ENCODE measurements at regions of chr3 and their contacts with region 1.

Region 1: DNA sequence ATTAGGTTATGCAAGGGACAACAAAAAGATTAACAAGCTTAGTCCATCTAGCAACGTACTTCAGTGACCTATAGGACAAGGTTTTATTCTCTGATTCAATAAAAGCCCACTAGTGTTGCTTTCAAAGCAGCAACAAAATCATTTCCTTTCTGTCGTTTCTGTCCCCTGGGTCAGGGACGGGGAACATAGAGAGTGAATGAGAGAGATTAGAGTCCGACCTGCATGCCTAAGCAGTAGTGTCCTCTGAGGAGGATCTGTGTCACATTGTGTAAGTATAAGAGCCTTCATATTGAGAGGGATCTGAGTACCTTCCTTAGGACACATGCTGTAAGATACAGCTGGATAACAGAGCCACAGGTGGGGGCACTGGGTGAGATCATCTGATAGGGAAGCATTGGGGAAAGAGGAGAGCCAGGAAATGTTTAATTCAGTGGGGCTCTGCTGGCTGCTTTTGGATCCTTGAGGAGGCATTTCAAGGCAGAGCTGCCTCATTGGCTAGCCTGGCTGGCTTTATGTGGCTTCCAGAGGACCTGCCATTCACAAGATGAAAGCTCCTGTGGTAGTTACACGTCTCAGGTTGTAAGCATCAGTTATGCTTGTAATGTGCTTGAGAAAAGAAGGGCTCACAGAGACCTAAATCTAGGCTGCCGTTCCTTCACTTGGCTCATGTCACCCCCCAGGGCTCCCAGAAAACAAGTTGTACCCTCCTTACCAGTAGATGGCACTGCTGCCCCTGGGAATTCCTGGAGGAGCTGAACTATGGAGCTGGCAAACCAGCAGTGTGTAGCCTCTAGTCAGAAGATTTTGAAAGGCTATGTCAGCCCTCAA is 2.7 kb downstream of the TMEM108 start:
- DNase-seq: peak; percentile 78
- H3K4me3 ChIP-seq: peak overlapping the region; percentile 26 to 27; a peak in 2 of 4 replicates
- H3K27ac ChIP-seq: peak overlapping the region in 1 of 2 experiments; percentile 74; a peak in 2 of 4 replicates
- H3K4me1 ChIP-seq: peaks cover 7 to 24% of the 10 kb centered on the region in 2 experiments; a peak in 3 of 4 replicates
- H3K27me3 ChIP-seq: peaks cover 7% of the 10 kb centered on the region; the same call in 1 of the 2 replicates
- CTCF ChIP-seq: peak; percentile 92
- EP300 ChIP-seq: no peak
- RAD21 ChIP-seq: peak; percentile 99

Region 2: DNA sequence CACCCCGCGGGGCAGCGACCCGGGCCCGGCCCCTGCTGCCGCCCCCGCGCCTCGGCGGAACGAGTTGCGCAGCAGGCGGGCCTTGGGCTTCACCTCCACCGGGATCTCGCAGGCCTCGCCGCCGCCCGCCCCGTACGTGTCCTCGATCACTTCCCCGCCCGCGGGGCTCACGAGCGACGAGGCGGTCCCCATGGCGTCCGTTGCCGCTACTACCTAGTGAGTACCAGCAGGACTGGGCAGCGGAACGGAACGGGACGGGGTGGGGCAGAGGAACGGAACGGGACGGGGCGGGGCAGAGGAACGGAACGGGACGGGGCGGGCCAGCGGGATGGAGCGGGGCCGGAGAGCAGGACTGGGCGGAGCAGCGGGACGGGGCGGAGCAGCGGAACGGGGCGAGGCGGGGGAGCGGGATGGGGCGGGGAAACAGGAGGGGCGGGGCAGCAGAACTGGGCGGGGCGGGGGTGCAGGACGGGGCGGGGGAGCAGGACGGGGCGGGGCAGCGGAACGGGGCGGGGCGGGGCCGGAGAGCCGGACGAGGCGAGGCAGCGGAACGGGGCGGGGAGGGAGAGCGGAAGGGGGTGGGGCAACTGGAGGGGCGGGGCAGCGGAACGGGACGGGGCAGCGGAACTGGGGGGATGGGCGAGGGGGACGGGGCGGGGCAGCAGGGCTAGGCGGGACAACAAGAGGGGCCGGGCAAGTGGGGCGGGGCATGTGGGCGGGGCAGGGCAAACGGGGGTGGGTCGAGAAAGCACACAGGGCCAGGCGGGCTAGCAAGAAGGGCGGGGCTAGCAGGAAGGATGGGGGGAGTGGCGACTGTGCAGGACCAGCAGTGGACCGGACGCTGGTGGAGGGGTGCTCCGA is 318.5 kb before region 1 on chr3 and contains the start of gene NPHP3:
- CTCF ChIA-PET with region 1: interaction called, 42 read pairs
- POLR2A ChIA-PET with region 1: no interaction called
- DNase-seq: peak; percentile 98
- H3K4me3 ChIP-seq: peak within 1 kb of the TSS; percentile 83 to 84
- H3K27ac ChIP-seq: peak within 1 kb of the TSS; percentile 85 to 96
- H3K4me1 ChIP-seq: peaks cover 4 to 5% of the 10 kb centered on the region in 2 experiments; a peak in 3 of 4 replicates
- H3K27me3 ChIP-seq: no peaks in the 10 kb centered on the region
- CTCF ChIP-seq: no peak; the same call in 1 of the 2 replicates
- EP300 ChIP-seq: no peak
- RAD21 ChIP-seq: no peak
- polyA plus RNA-seq, gene NPHP3: 19.0 and 27.4 TPM in 2 replicates

Region 3: DNA sequence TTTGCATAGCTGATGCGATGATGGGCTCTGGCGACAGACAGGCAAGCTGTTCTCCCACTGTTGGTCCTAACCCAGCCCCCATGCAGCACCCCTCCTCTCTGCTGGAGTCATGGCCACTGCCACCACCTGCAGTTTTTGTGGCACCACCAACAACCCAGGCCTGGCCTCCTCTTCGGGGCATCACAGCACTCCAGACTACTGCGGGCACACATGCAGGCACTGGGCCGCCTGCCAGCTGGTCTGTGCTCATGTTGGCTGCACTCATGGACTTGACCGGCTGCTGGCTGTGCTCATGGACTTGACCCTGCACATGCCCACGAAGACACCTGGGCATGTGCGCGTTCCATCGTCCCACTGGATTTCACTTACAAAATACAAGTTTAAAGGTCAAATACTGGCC is 133.6 kb before region 1 on chr3:
- CTCF ChIA-PET with region 1: no interaction called
- POLR2A ChIA-PET with region 1: no interaction called
- DNase-seq: no peak
- H3K4me3 ChIP-seq: no peak overlapping the region
- H3K27ac ChIP-seq: no peak overlapping the region
- H3K4me1 ChIP-seq: no peaks in the 10 kb centered on the region; a peak in 1 of 4 replicates
- H3K27me3 ChIP-seq: no peaks in the 10 kb centered on the region
- CTCF ChIP-seq: no peak
- EP300 ChIP-seq: no peak
- RAD21 ChIP-seq: no peak

Region 4: GRCh38 chr3:133113526-133113925 is 72.6 kb after region 1 on chr3:
- CTCF ChIA-PET with region 1: interaction called, 18 read pairs
- POLR2A ChIA-PET with region 1: no interaction called
- DNase-seq: no peak
- H3K4me3 ChIP-seq: peak overlapping the region in 1 of 2 experiments; percentile 34; a peak in 2 of 4 replicates
- H3K27ac ChIP-seq: peak overlapping the region; percentile 47 to 59
- H3K4me1 ChIP-seq: peaks cover 10 to 18% of the 10 kb centered on the region in 2 experiments; a peak in 3 of 4 replicates
- H3K27me3 ChIP-seq: no peaks in the 10 kb centered on the region
- CTCF ChIP-seq: no peak
- EP300 ChIP-seq: no peak
- RAD21 ChIP-seq: no peak

Region 5: GRCh38 chr3:133246119-133246518 is 205.2 kb after region 1 on chr3:
- CTCF ChIA-PET with region 1: interaction called, 44 read pairs
- POLR2A ChIA-PET with region 1: no interaction called
- DNase-seq: peak; percentile 38
- H3K4me3 ChIP-seq: no peak overlapping the region
- H3K27ac ChIP-seq: peak overlapping the region in 1 of 2 experiments; percentile 99; a peak in 3 of 4 replicates
- H3K4me1 ChIP-seq: peaks cover 0 to 35% of the 10 kb centered on the region in 2 experiments; a peak in 2 of 4 replicates
- H3K27me3 ChIP-seq: no peaks in the 10 kb centered on the region
- CTCF ChIP-seq: no peak
- EP300 ChIP-seq: peak in 1 of 2 experiments; percentile 62; a peak in 2 of 4 replicates
- RAD21 ChIP-seq: no peak

Region 6: GRCh38 chr3:133282236-133282635 is 241.3 kb after region 1 on chr3:
- CTCF ChIA-PET with region 1: interaction called, 10 read pairs
- POLR2A ChIA-PET with region 1: no interaction called
- DNase-seq: no peak
- H3K4me3 ChIP-seq: no peak overlapping the region
- H3K27ac ChIP-seq: peak overlapping the region in 1 of 2 experiments; percentile 5; a peak in 1 of 4 replicates
- H3K4me1 ChIP-seq: peaks cover 7 to 22% of the 10 kb centered on the region in 2 experiments; a peak in 3 of 4 replicates
- H3K27me3 ChIP-seq: no peaks in the 10 kb centered on the region
- CTCF ChIP-seq: no peak
- EP300 ChIP-seq: no peak
- RAD21 ChIP-seq: no peak

Region 7: DNA sequence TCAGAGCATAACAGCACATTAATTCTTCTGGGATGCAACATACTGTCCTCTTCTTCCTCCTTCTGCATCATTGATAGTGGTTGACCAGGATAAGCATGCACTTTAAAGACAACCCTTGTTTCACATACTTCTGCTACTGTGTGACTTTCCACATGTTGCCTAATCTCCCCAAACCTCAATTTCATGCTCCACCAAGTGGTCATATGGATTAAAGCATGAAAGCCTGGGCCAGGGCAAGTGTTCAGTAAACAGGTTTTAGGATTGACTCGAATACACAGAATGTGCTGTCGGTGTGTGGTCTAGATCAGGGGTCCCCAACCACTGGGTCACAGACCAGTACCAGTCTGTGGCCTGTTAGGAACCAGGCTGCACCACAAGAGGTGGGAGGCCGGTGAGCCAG is 336.5 kb after region 1 on chr3:
- CTCF ChIA-PET with region 1: interaction called, 178 read pairs
- POLR2A ChIA-PET with region 1: no interaction called
- DNase-seq: peak; percentile 60
- H3K4me3 ChIP-seq: no peak overlapping the region
- H3K27ac ChIP-seq: peak overlapping the region in 1 of 2 experiments; percentile 16; a peak in 1 of 4 replicates
- H3K4me1 ChIP-seq: peaks cover 25 to 31% of the 10 kb centered on the region in 2 experiments; a peak in 2 of 4 replicates
- H3K27me3 ChIP-seq: no peaks in the 10 kb centered on the region
- CTCF ChIP-seq: peak; percentile 70
- EP300 ChIP-seq: no peak
- RAD21 ChIP-seq: peak; percentile 85

Region 8: GRCh38 chr3:133419151-133419909 is 378.4 kb after region 1 on chr3:
- CTCF ChIA-PET with region 1: interaction called, 25 read pairs
- POLR2A ChIA-PET with region 1: no interaction called
- DNase-seq: no peak
- H3K4me3 ChIP-seq: no peak overlapping the region
- H3K27ac ChIP-seq: no peak overlapping the region
- H3K4me1 ChIP-seq: no peaks in the 10 kb centered on the region; a peak in 1 of 4 replicates
- H3K27me3 ChIP-seq: no peaks in the 10 kb centered on the region
- CTCF ChIP-seq: no peak
- EP300 ChIP-seq: no peak
- RAD21 ChIP-seq: no peak